Activated CD4-positive, alpha-beta T cell treated with anti-CD3 and anti-CD28 coated beads, Interleukin-2, amount 10 ng/mL, durations not matched to agents 7 days and 5 days (primary cell): ENCODE measurements at regions of chr3 and their contacts with region 1.

Region 1: DNA sequence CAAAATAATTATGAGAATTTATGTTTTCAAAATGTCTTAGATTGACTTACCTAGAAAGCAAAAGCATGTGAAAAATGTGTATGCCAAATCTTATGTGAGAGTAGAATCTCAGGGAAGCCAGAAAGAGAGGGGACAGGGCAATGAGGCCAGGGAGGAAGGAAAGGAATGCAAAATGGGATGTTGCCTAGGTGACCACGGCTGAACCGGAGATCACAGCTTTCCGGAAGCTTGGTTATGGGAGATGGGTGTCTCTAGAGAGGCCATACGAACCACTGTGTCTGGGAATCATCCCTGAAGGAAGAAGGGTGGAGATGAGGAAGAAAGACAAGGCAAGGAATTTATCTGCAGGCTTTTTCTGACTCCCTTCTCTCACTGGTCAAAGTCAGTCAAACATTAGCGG is 76.0 kb downstream of the SUCLG2 start:
- DNase-seq: no peak
- H3K4me3 Mint-ChIP-seq: no peak overlapping the region
- H3K27ac Mint-ChIP-seq: no peak overlapping the region
- H3K4me1 Mint-ChIP-seq: no peaks in the 10 kb centered on the region
- H3K27me3 Mint-ChIP-seq: no peaks in the 10 kb centered on the region

Region 2: DNA sequence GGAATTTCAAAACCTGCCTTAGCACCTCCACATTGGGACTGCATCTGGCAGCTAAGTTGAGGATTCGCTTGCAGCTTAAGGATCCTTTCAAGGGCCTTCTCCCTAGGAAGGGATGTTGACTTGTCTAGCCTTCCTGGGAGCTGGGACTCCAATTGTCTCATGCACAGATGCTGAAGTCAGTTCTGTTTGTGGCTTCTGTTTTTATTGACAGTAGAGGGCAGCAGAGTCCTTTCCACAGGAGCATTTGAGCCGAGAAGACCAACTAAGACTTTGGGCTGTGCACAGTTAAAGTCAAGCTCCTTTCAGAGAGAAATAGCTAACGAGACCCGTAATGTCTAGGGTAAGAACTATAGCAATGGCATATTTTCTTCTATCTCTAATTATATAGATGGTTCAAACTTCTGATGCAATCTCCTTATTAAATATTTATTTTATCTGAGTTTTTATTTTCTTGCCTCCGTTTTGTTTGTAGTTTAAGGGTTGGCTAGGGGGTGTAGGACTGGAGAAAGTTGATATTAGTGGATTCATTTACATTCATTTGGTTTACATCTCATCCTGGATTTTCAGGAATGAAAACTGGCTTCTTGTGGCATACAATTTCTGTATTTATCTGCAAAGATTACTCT is 640.0 kb before region 1 on chr3:
- CTCF ChIA-PET with region 1: no interaction called
- POLR2A ChIA-PET with region 1: interaction called, 10 read pairs
- DNase-seq: peak; percentile 46
- H3K4me3 Mint-ChIP-seq: no peak overlapping the region
- H3K27ac Mint-ChIP-seq: no peak overlapping the region
- H3K4me1 Mint-ChIP-seq: no peaks in the 10 kb centered on the region
- H3K27me3 Mint-ChIP-seq: peaks cover 10% of the 10 kb centered on the region

Region 3: GRCh38 chr3:67500709-67501108 is 77.7 kb before region 1 on chr3:
- CTCF ChIA-PET with region 1: no interaction called
- POLR2A ChIA-PET with region 1: no interaction called
- DNase-seq: no peak
- H3K4me3 Mint-ChIP-seq: no peak overlapping the region
- H3K27ac Mint-ChIP-seq: no peak overlapping the region
- H3K4me1 Mint-ChIP-seq: no peaks in the 10 kb centered on the region
- H3K27me3 Mint-ChIP-seq: no peaks in the 10 kb centered on the region